ENCODE measurements at regions of chr6 and their contacts with region 1.

Region 1: DNA sequence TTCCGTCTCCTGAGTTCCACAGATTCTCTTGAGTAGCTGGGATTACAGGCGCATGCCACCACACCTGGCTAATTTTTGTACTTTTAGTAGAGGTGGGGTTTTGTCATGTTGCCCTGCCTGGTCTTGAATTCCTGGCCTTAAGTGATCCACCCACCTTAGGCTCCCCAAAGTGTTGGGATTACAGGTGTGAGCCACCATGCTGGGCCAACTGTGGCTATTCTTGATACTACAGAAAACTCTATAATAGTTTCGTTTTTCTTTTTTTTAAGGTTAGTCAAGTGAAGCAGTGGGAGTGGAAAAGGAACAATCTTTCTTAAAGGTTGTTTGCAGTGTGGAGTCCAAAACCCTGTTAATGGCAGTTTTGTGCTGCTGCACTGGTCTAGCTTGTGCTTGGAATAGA is 84.7 kb downstream of the POPDC3 start:
- DNase-seq: no peak
- ATAC-seq: no peak
- H3K4me3 ChIP-seq: no peak overlapping the region
- H3K4me3 Mint-ChIP-seq: no peak overlapping the region
- H3K27ac ChIP-seq: no peak overlapping the region
- H3K27ac Mint-ChIP-seq: no peak overlapping the region
- H3K4me1 ChIP-seq: no peaks in the 10 kb centered on the region
- H3K4me1 Mint-ChIP-seq: no peaks in the 10 kb centered on the region
- H3K27me3 ChIP-seq: no peaks in the 10 kb centered on the region
- H3K27me3 Mint-ChIP-seq: peaks cover 2 to 4% of the 10 kb centered on the region in 2 donors

Region 2: GRCh38 chr6:104829183-104829958 is 265.8 kb before region 1 on chr6:
- CTCF ChIA-PET with region 1: no interaction called
- POLR2A ChIA-PET with region 1: no interaction called
- DNase-seq: no peak
- ATAC-seq: no peak
- H3K4me3 ChIP-seq: no peak overlapping the region
- H3K4me3 Mint-ChIP-seq: no peak overlapping the region
- H3K27ac ChIP-seq: no peak overlapping the region
- H3K27ac Mint-ChIP-seq: no peak overlapping the region
- H3K4me1 ChIP-seq: no peaks in the 10 kb centered on the region
- H3K4me1 Mint-ChIP-seq: peaks cover 0 to 7% (median 3%) of the 10 kb centered on the region in 3 donors
- H3K27me3 ChIP-seq: no peaks in the 10 kb centered on the region
- H3K27me3 Mint-ChIP-seq: no peaks in the 10 kb centered on the region

Region 3: GRCh38 chr6:105116150-105116549 is 21.0 kb after region 1 on chr6:
- CTCF ChIA-PET with region 1: interaction called in 1 of 2 experiments, 10 read pairs
- POLR2A ChIA-PET with region 1: no interaction called
- DNase-seq: no peak
- ATAC-seq: no peak
- H3K4me3 ChIP-seq: no peak overlapping the region
- H3K4me3 Mint-ChIP-seq: no peak overlapping the region
- H3K27ac ChIP-seq: no peak overlapping the region
- H3K27ac Mint-ChIP-seq: no peak overlapping the region
- H3K4me1 ChIP-seq: no peaks in the 10 kb centered on the region
- H3K4me1 Mint-ChIP-seq: no peaks in the 10 kb centered on the region
- H3K27me3 ChIP-seq: peaks cover 0 to 16% of the 10 kb centered on the region in 2 experiments
- H3K27me3 Mint-ChIP-seq: peaks cover 8 to 9% of the 10 kb centered on the region in 2 donors

Region 4: DNA sequence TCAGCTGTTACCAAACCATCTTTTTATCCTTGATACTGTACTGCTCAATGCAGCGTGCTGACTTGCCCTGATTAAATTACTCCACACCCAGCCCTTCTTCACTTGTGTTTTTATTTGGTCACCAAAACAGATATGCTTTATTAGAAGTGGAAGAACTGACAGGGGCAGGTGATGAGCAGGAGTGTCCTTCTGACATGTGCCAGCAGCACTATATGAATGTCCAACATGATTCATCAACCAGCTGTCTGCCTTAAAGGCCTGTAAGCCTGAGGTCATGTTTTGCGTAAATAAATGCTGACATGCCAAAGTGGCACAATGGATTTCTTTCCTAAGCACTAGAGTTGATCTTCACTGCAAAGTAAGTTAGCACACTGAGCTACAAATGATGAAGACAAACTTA is 69.3 kb after region 1 on chr6:
- CTCF ChIA-PET with region 1: no interaction called
- POLR2A ChIA-PET with region 1: no interaction called
- DNase-seq: no peak
- ATAC-seq: no peak
- H3K4me3 ChIP-seq: no peak overlapping the region
- H3K4me3 Mint-ChIP-seq: no peak overlapping the region
- H3K27ac ChIP-seq: no peak overlapping the region
- H3K27ac Mint-ChIP-seq: no peak overlapping the region
- H3K4me1 ChIP-seq: no peaks in the 10 kb centered on the region
- H3K4me1 Mint-ChIP-seq: no peaks in the 10 kb centered on the region
- H3K27me3 ChIP-seq: peaks cover 0 to 10% of the 10 kb centered on the region in 2 experiments
- H3K27me3 Mint-ChIP-seq: peaks cover 37 to 56% of the 10 kb centered on the region in 2 donors